Activated naive CD4-positive, alpha-beta T cell treated with anti-CD3 and anti-CD28 coated beads for 36 hours (primary cell): ENCODE measurements at regions of chr5 and their contacts with region 1.

Region 1: DNA sequence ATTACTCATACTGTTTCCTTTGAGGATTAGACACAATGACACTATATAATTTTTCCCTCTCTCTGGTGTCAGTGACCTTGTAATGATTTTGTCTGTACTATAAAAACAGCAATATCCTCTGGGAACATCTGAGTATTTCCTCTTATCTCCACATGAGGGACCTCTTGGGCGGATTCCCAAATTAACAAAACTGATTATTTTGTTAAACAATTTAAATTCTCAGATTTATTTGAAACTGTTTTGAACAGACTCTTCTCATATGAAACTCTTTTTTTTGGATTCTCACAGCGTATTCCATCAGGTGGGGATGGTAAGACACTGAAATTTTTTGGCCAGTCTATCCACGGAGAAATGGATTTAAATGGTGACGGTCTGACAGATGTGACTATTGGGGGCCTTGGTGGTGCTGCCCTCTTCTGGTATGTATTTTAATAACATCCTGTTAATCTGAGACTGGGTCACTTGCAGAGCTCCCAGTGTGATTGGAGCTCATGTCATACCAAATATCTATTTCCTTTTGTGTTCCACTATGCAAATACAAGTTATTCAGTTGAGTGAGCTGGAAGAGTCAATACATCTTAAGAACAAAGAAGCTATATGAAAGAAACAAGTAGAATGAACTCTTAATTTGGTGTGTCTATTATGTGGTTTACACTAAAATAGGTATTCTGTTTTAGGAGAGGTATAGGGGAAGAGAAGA is 73.8 kb upstream of the ITGA2 start:
- DNase-seq: peak; percentile 64
- H3K4me3 Mint-ChIP-seq: peak overlapping the region; percentile 27
- H3K27ac Mint-ChIP-seq: no peak overlapping the region
- H3K4me1 Mint-ChIP-seq: peaks cover 9% of the 10 kb centered on the region
- H3K27me3 Mint-ChIP-seq: no peaks in the 10 kb centered on the region

Region 2: GRCh38 chr5:52063186-52063585 is 852.1 kb before region 1 on chr5:
- CTCF ChIA-PET with region 1: no interaction called
- intact Hi-C with region 1: no loop called
- DNase-seq: no peak
- H3K4me3 Mint-ChIP-seq: no peak overlapping the region
- H3K27ac Mint-ChIP-seq: no peak overlapping the region
- H3K4me1 Mint-ChIP-seq: no peaks in the 10 kb centered on the region
- H3K27me3 Mint-ChIP-seq: no peaks in the 10 kb centered on the region

Region 3: DNA sequence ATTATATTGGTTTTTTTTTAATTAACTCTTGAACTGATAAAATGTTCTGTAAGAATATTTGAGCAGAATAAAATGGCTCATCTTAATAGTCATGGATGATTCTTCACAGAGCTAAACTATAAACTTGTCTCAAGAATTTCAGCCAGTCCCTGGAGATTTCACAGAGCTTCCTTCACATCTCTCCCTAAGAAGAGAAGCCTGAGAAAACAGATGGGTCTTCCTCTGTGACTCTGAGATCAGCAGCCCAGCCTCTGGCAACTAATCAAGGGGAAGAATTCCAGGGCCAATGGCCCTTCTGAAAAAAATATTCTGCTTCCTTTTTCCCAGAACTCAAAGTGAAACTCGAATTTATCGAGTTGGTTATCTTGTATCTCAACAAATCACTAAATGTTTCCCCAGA is 249.8 kb before region 1 on chr5:
- CTCF ChIA-PET with region 1: interaction called, 4 read pairs
- intact Hi-C with region 1: loop called (anchors 1 kb)
- DNase-seq: no peak
- H3K4me3 Mint-ChIP-seq: no peak overlapping the region
- H3K27ac Mint-ChIP-seq: no peak overlapping the region
- H3K4me1 Mint-ChIP-seq: peaks cover 3% of the 10 kb centered on the region
- H3K27me3 Mint-ChIP-seq: no peaks in the 10 kb centered on the region

Region 4: GRCh38 chr5:52693280-52693679 is 222.0 kb before region 1 on chr5:
- CTCF ChIA-PET with region 1: interaction called, 21 read pairs
- intact Hi-C with region 1: loop called (anchors 1 kb)
- DNase-seq: peak; percentile 59
- H3K4me3 Mint-ChIP-seq: no peak overlapping the region
- H3K27ac Mint-ChIP-seq: no peak overlapping the region
- H3K4me1 Mint-ChIP-seq: no peaks in the 10 kb centered on the region
- H3K27me3 Mint-ChIP-seq: no peaks in the 10 kb centered on the region

Region 5: GRCh38 chr5:52825826-52826225 is 89.5 kb before region 1 on chr5:
- CTCF ChIA-PET with region 1: interaction called, 11 read pairs
- intact Hi-C with region 1: no loop called
- DNase-seq: peak; percentile 7
- H3K4me3 Mint-ChIP-seq: no peak overlapping the region
- H3K27ac Mint-ChIP-seq: no peak overlapping the region
- H3K4me1 Mint-ChIP-seq: peaks cover 8% of the 10 kb centered on the region
- H3K27me3 Mint-ChIP-seq: no peaks in the 10 kb centered on the region

Region 6: GRCh38 chr5:53095931-53096525 is 180.7 kb after region 1 on chr5:
- CTCF ChIA-PET with region 1: interaction called, 4 read pairs
- intact Hi-C with region 1: loop called (anchors 1 kb)
- DNase-seq: peak; percentile 89
- H3K4me3 Mint-ChIP-seq: no peak overlapping the region
- H3K27ac Mint-ChIP-seq: no peak overlapping the region
- H3K4me1 Mint-ChIP-seq: peaks cover 4% of the 10 kb centered on the region
- H3K27me3 Mint-ChIP-seq: no peaks in the 10 kb centered on the region

Region 7: DNA sequence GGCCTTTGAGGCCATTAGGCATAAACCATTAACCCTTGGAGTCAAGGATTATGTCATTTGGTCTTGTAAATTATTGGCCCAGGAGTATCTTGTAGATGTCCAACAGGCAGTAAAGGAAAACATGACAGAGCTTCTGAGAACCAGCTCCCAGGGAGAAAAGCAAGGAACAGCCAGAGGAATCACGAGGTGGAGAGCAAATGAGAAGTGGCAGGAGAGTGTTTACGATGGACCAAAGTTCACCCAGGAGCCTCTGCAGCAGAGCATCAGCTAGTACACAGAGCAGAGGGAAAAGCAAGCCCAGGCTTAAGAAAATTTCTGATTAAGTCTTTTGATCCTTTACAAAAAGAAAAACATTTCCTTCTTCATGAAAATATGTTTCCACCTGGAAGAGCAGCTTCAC is 851.3 kb after region 1 on chr5:
- CTCF ChIA-PET with region 1: no interaction called
- intact Hi-C with region 1: no loop called
- DNase-seq: no peak
- H3K4me3 Mint-ChIP-seq: no peak overlapping the region
- H3K27ac Mint-ChIP-seq: no peak overlapping the region
- H3K4me1 Mint-ChIP-seq: no peaks in the 10 kb centered on the region
- H3K27me3 Mint-ChIP-seq: peaks cover 4% of the 10 kb centered on the region